ENCODE measurements at regions of chr4 and their contacts with region 1.

Region 1: GRCh38 chr4:77881460-77882278 is 19.0 kb downstream of the MRPL1 start:
- DNase-seq: no peak
- CTCF ChIP-seq: no peak

Region 2: GRCh38 chr4:77893451-77893850 is 11.8 kb after region 1 on chr4:
- CTCF ChIA-PET with region 1: interaction called, 16 read pairs
- POLR2A ChIA-PET with region 1: no interaction called
- DNase-seq: no peak
- CTCF ChIP-seq: no peak

Measured in GM10248 (cell line).